Psoas muscle (tissue), 8 donors: ENCODE measurements at regions of chr12 and their contacts with region 1.

Region 1: DNA sequence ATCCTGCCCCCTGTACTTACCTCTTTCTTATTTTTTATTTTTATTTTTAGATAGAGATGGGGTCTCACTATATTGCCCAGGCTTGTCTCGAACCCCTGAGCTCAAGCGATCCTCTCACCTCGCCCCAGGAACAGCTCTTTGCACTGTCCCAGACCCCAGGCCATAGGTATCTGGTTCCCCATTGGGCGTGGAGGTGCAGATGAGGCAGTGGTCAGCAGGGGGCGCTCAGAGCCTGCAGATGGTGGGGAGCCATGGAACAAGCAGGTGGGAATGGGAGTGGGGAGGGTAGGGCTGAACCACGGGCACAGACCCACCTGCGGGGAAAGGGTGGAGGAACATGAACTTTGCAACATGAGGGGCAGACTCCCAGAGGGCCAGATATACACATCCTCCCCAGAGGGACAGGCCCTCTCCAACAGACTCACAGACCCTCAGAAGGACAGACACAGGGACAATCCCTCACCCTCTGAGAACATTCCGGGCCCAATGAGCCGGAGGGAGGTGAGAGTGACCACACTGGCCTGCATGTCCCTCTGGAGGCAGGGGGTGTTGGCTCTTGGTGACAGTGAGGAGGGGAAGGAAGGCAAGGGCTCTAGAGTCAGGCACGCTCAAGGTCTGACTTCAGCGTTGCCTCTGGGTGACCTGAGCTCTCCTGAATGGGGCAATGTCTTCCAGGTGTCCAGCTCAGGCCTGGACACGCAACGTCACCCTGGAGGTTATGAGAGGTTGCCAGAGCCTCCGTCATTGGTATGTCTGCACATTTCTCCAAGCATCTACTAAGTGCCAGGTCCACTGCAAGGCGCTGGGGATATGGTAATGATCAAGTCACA is 34.9 kb downstream of the KRT80 start:
- DNase-seq: peak; percentile 74 to 85
- ATAC-seq: peak; percentile 78 to 86 (median 83)
- H3K4me3 ChIP-seq: no peak overlapping the region
- H3K27ac ChIP-seq: no peak overlapping the region
- H3K4me1 ChIP-seq: peaks cover 4% of the 10 kb centered on the region
- H3K27me3 ChIP-seq: no peaks in the 10 kb centered on the region
- CTCF ChIP-seq: peak; percentile 94

Region 2: GRCh38 chr12:52087961-52088820 is 68.8 kb before region 1 on chr12:
- intact Hi-C with region 1: no loop called
- DNase-seq: peak in 1 of 2 donors; percentile 60
- ATAC-seq: peak in 3 of 4 donors; percentile 47 to 61 (median 53)
- H3K4me3 ChIP-seq: peak overlapping the region; percentile 39
- H3K27ac ChIP-seq: peak overlapping the region; percentile 72
- H3K4me1 ChIP-seq: peaks cover 31% of the 10 kb centered on the region
- H3K27me3 ChIP-seq: no peaks in the 10 kb centered on the region
- CTCF ChIP-seq: no peak

Region 3: DNA sequence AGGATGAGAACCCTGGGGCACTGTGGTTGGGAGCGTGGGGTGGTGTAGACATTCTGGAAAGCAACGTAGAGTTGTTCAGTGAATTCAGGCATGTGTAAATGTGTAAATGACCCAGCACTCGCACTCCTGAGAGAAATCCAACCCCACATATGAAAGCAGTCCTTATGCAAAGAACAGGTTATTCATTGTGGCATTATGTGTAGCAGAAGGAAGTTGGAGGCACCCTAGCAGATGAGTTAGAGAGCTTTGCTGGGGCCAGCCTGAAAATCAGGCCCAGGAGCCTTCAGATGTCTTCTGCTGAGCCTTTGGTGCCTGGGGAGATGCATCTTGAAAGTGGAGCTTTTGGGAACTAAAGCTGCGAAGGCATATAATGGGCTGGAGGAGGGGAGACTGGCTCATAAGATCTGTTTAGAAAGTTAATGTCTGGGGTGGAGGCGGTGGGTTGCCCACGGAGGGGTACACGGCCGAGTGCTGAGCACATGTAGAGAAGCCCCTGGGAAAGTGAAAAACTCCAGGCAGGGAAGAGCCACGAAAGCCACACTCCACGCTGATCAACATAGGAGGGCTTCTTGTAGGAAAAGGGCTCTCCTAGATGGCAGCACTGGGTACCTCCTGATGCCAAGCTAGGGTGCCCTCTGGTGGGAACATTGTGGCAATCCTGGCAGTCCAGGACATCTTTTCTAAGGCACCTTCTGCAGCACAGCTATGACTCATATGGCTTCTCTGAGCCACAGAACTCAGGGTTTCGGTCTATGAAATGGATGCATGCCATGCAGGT is 170.3 kb after region 1 on chr12:
- intact Hi-C with region 1: loop called (anchors 1 to 2 kb)
- DNase-seq: peak; percentile 66 to 82
- ATAC-seq: peak; percentile 97 to 99 (median 98)
- H3K4me3 ChIP-seq: no peak overlapping the region
- H3K27ac ChIP-seq: no peak overlapping the region
- H3K4me1 ChIP-seq: no peaks in the 10 kb centered on the region
- H3K27me3 ChIP-seq: peaks cover 0 to 10% (median 0%) of the 10 kb centered on the region in 3 donors
- CTCF ChIP-seq: peak; percentile 78

Region 4: DNA sequence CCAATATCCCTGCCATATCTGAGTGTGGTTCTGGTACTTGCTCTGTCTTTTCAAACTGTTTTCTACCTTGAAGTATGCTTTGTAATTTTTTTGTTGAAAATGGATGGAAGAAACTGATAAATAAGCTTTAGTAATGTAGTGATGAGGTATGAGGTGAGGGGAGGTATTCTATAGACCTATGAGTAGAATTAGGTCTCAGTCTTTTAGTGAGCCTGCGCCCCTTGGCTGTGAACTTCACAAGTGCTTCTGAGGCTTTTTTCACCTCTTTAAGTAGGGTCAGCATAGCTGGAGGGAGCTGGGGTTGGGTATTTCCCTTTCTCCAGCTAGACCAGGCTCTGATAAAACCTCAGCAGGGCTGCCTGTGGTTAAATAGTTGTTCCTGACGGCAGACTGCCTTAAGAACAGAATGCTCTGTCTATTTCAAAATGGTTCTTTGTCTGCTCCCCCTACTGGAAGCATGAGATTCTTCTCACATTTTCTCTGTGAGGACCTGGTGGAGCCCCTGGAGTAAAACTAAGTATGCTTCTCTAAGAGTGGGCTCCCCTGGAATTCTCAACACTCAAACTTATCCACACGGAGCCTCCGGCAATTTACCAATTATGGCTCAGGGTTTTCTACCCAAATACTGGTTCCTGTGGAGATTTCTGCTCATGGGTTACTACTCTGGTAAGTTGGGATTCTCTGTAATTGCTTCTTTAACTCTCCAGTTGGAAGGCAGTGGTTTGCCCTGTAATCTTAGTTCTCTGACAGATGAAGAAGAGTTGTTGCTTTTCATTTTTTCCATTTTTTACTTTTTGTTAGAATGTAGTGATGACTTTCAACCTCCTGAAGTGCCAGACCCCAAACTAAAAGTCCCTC is 350.1 kb after region 1 on chr12:
- intact Hi-C with region 1: loop called in 1 of 2 experiments (anchors 10 kb)
- DNase-seq: no peak
- ATAC-seq: no peak
- H3K4me3 ChIP-seq: no peak overlapping the region
- H3K27ac ChIP-seq: no peak overlapping the region
- H3K4me1 ChIP-seq: no peaks in the 10 kb centered on the region
- H3K27me3 ChIP-seq: peaks cover 2 to 13% (median 3%) of the 10 kb centered on the region in 3 donors
- CTCF ChIP-seq: peak; percentile 29

Region 5: GRCh38 chr12:52879394-52880351 is 722.7 kb after region 1 on chr12:
- intact Hi-C with region 1: loop called (anchors 2 to 5 kb)
- DNase-seq: peak; percentile 66 to 79
- ATAC-seq: peak; percentile 80 to 90 (median 84)
- H3K4me3 ChIP-seq: peak overlapping the region; percentile 33
- H3K27ac ChIP-seq: no peak overlapping the region
- H3K4me1 ChIP-seq: peaks cover 4% of the 10 kb centered on the region
- H3K27me3 ChIP-seq: peaks cover 0 to 14% (median 0%) of the 10 kb centered on the region in 3 donors
- CTCF ChIP-seq: peak; percentile 80

Region 6: DNA sequence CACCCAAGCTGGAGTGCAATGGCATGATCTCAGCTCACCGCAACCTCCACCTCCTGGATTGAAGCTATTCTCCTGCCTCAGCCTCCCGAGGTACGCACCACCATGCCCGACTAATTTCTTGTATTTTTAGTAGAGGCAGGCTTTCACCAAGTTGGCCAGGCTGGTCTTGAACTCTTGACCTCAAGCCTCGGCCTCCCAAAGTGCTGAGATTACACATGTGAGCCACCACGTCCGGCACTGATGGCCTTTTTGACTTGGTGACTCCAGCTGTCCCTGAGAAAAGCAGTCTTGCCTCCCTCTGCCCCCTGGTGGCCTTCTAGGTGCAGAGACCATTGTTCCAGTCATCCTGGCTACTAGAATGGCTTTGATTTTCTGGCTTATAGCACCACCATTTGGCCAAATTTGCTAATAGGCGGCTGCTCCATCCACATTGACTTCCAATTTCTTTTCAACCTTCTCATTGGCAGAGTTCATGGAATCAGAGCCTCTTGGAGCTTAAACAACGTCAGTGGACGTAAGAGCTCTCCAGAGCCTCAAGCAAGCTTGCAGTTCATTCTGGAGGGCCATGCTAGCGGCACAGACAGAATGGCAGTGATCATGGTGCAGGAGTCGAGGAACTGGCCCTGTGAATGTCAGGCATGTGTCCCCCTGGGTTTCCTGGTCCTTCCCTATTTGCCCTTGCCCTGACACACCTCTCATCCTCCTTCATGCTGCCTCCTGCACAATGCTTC is 823.9 kb after region 1 on chr12:
- intact Hi-C with region 1: loop called in 1 of 2 experiments (anchors 5 kb)
- DNase-seq: peak; percentile 85 to 89
- ATAC-seq: peak; percentile 92 to 98 (median 94)
- H3K4me3 ChIP-seq: no peak overlapping the region
- H3K27ac ChIP-seq: no peak overlapping the region
- H3K4me1 ChIP-seq: no peaks in the 10 kb centered on the region
- H3K27me3 ChIP-seq: peaks cover 0 to 15% (median 0%) of the 10 kb centered on the region in 3 donors
- CTCF ChIP-seq: peak; percentile 95